GM13976 (cell line): ENCODE measurements at regions of chr17 and their contacts with region 1.

Region 1: DNA sequence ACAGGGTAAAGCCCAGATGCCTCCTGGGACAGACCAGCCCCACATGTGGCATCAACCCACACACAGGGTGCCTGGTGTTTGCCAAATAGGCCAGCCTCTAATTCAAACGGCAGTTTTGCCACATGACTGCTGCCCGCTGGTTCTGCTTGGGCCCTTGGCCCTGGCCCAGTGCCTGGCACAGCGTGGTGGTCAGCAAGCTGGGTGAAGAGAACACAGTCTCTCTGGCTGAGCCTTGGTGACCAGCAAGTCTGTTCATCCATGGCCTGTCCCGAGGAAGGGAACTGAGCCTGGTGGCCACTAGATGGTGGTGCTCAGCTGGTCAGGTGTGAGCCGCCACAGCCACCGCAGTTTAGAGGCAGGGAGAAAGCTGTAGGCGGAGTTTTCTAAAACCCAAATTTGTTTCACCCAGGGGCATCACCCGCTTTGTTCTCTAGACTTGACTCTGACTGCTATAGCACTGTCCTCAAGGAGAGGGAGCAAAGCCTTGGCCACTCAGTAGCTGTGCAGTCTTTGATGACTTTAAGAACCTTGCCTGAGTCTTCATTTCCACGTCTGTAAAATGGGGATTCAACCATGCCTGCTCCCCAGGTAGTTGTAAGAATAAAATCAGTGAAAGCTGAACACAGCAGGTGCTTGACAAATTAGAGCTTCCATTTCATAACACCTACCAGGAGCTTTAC is 4.7 kb upstream of the GFAP start:
- DNase-seq: peak; percentile 92
- CTCF ChIP-seq: peak; percentile 94

Region 2: GRCh38 chr17:45021607-45022287 is 101.7 kb after region 1 on chr17:
- in situ Hi-C with region 1: loop called (anchors 10 kb)
- DNase-seq: peak; percentile 93
- CTCF ChIP-seq: peak; percentile 91

Region 3: DNA sequence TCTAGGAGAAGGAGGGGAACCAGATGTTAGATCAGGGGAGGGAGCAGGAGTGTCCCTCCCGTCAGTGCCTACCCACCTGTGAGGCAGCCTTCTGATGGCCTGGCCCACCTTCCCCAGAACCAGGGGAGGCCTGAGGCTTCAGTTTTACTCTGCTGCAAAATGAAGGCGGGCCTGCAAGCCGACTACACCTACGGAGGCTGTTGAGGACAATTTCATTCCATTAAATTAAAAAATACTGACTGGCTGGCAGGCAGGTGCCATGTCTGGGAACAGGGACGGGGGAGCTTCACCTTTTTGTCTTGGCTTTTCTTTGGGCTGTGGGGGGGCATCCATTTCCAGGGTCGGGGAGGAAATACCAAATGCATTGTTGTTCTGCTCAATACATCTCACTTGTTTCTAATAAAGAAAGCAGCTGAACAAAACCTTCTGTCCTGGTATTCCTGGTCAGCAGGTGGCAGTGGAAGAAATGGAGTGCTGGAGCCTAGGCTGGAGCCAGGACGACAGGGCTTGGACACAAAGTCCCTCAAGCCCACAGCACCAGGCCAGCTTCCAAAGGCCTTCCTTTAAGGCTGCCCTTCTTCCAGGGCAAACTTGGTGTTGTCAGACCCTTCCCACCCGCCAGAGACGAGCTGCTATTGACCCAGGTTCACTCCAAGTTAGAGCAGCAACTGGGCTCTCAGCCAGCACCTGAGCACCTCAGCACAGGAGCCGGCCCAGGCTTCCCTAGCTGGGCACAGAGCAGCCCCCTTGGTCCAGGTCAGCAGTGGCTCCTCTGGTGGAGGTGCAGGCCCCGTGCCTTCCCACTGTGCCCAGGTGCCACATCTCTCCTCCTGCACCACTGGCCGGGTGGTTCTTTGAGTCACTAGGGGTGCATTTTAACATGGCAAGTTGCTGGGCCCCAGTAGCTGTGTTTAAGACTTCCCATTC is 188.8 kb after region 1 on chr17:
- in situ Hi-C with region 1: loop called (anchors 10 kb)
- DNase-seq: no peak
- CTCF ChIP-seq: no peak

Region 4: GRCh38 chr17:45135192-45135977 is 215.4 kb after region 1 on chr17 and contains the start of gene ACBD4:
- in situ Hi-C with region 1: no loop called
- DNase-seq: peak; percentile 97
- CTCF ChIP-seq: peak; percentile 100